ENCODE measurements at regions of chr10 and their contacts with region 1.

Region 1: DNA sequence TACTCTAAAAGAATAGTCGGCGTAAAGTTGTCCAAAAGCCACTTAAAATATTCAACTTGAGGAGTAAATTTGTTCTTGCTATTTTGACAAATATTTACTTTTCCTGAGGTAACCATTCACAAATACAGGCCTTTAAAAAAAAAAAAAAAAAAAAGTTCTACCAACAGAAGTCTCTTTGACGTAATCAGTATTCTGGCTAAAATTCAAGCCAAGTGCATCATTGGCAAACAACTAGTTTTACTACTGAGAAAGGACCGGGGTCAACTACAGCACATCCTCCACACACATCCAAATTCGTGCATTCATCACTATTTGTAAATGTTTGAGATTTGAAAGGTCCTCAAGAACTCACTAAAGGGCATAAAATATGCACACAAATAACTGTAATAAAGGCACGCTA is 2.0 kb downstream of the OAT start:
- DNase-seq: no peak
- ATAC-seq: no peak
- H3K4me3 ChIP-seq: no peak overlapping the region
- H3K27ac ChIP-seq: no peak overlapping the region
- H3K4me1 ChIP-seq: no peaks in the 10 kb centered on the region
- H3K27me3 ChIP-seq: 0 out of 4 replicates have a peak, but pooled peaks cover 0 to 6% of the 10 kb centered on the region in 2 experiments
- CTCF ChIP-seq: no peak
- EP300 ChIP-seq: no peak
- POLR2A ChIP-seq: no peak
- RAD21 ChIP-seq: no peak

Region 2: GRCh38 chr10:123926401-123927264 is 490.1 kb before region 1 on chr10:
- CTCF ChIA-PET with region 1: no interaction called
- POLR2A ChIA-PET with region 1: no interaction called
- RAD21 ChIA-PET with region 1: no interaction called
- SMC1A ChIA-PET with region 1: no interaction called
- in situ Hi-C with region 1: no loop called
- intact Hi-C with region 1: no loop called
- DNase-seq: peak; percentile 5
- ATAC-seq: peak; percentile 79
- H3K4me3 ChIP-seq: no peak overlapping the region
- H3K27ac ChIP-seq: no peak overlapping the region
- H3K4me1 ChIP-seq: no peaks in the 10 kb centered on the region
- H3K27me3 ChIP-seq: no peaks in the 10 kb centered on the region
- CTCF ChIP-seq: no peak
- EP300 ChIP-seq: no peak
- POLR2A ChIP-seq: no peak
- RAD21 ChIP-seq: no peak

Region 3: GRCh38 chr10:124106241-124106879 is 310.4 kb before region 1 on chr10:
- CTCF ChIA-PET with region 1: no interaction called
- POLR2A ChIA-PET with region 1: interaction called, 14 read pairs
- RAD21 ChIA-PET with region 1: no interaction called
- SMC1A ChIA-PET with region 1: no interaction called
- in situ Hi-C with region 1: no loop called
- intact Hi-C with region 1: no loop called
- DNase-seq: peak; percentile 57
- ATAC-seq: peak; percentile 97
- H3K4me3 ChIP-seq: peak overlapping the region; percentile 34; the same call in 1 of the 2 replicates
- H3K27ac ChIP-seq: peak overlapping the region; percentile 33
- H3K4me1 ChIP-seq: peaks cover 25% of the 10 kb centered on the region
- H3K27me3 ChIP-seq: peaks cover 0 to 5% of the 10 kb centered on the region in 2 experiments; a peak in 3 of 4 replicates
- CTCF ChIP-seq: no peak
- EP300 ChIP-seq: no peak
- POLR2A ChIP-seq: no peak
- RAD21 ChIP-seq: no peak

Region 4: DNA sequence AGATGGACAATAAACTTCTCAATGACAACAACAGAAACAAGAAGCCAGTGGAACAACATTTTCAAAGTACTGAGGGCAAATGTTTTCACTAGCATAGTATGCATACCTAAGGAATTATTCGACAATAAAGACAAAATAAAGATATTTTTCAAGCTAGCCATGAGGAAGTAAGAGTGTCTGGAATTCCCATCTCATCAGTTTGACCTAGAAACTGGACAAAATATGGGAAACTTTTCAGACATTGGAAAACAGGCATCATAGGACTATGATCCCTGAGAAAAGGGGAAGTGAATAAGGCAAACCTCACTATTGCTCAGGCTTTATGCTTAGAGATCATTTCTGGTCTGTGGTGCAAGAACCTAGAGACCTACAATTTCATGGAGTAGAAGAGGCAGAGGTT is 84.3 kb before region 1 on chr10:
- CTCF ChIA-PET with region 1: no interaction called
- POLR2A ChIA-PET with region 1: no interaction called
- RAD21 ChIA-PET with region 1: no interaction called
- SMC1A ChIA-PET with region 1: no interaction called
- in situ Hi-C with region 1: no loop called
- intact Hi-C with region 1: no loop called
- DNase-seq: no peak
- ATAC-seq: no peak
- H3K4me3 ChIP-seq: no peak overlapping the region
- H3K27ac ChIP-seq: no peak overlapping the region
- H3K4me1 ChIP-seq: no peaks in the 10 kb centered on the region
- H3K27me3 ChIP-seq: no peaks in the 10 kb centered on the region
- CTCF ChIP-seq: no peak
- EP300 ChIP-seq: no peak
- POLR2A ChIP-seq: no peak
- RAD21 ChIP-seq: no peak

Region 5: DNA sequence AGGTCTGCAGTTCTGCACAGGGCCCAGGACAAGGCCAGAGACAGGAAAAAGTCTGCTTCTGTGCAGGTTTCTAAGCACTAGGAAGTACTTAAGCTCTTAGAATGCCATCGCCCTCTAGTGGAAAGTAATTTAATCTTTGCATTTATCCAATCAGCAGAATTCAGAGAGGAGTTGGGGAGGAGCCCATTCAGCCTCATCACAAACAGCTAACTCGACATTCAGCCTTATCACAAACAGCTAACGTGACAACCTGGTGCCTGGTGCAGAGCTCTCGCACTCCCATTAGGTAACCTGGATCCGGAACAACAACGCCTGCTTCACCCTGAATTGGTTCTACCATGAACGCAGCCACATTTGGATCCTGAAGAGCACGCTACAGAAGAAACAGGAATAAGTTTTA is 13.2 kb before region 1 on chr10:
- CTCF ChIA-PET with region 1: interaction called, 18 read pairs
- POLR2A ChIA-PET with region 1: no interaction called
- RAD21 ChIA-PET with region 1: interaction called, 3 read pairs
- SMC1A ChIA-PET with region 1: interaction called, 4 read pairs
- in situ Hi-C with region 1: no loop called
- intact Hi-C with region 1: no loop called
- DNase-seq: peak; percentile 45
- ATAC-seq: peak; percentile 100
- H3K4me3 ChIP-seq: no peak overlapping the region
- H3K27ac ChIP-seq: no peak overlapping the region
- H3K4me1 ChIP-seq: no peaks in the 10 kb centered on the region
- H3K27me3 ChIP-seq: no peaks in the 10 kb centered on the region
- CTCF ChIP-seq: peak; percentile 56 to 76 (median 73)
- EP300 ChIP-seq: no peak
- POLR2A ChIP-seq: 0 out of 2 replicates have a peak, but pooled peaks have one; percentile 19
- RAD21 ChIP-seq: peak; percentile 72

Region 6: GRCh38 chr10:124477614-124478363 is 61.1 kb after region 1 on chr10:
- CTCF ChIA-PET with region 1: no interaction called
- POLR2A ChIA-PET with region 1: no interaction called
- RAD21 ChIA-PET with region 1: no interaction called
- SMC1A ChIA-PET with region 1: no interaction called
- in situ Hi-C with region 1: no loop called
- intact Hi-C with region 1: no loop called
- DNase-seq: no peak
- ATAC-seq: no peak
- H3K4me3 ChIP-seq: no peak overlapping the region
- H3K27ac ChIP-seq: no peak overlapping the region
- H3K4me1 ChIP-seq: no peaks in the 10 kb centered on the region
- H3K27me3 ChIP-seq: no peaks in the 10 kb centered on the region; a peak in 1 of 4 replicates
- CTCF ChIP-seq: no peak
- EP300 ChIP-seq: no peak
- POLR2A ChIP-seq: no peak
- RAD21 ChIP-seq: no peak

Region 7: DNA sequence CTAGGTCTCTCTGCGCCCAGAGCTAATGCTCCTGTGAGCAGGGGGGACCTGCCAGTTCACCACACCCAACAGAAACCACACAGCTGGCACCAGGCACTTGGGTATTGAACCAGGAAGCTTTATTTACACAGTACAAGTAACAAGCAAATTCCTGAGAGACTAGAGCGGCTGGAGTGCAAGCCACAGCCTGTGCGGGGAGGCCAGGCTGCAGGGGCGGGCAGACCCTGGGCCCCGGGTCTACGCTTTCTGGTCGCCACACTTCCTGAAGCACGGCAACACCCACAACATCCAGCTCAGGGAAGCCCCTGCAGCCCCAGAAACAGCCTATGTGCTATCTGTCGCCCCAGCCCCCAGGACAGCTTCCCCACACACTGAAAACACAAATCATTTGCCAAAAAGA is 202.5 kb after region 1 on chr10:
- CTCF ChIA-PET with region 1: no interaction called
- POLR2A ChIA-PET with region 1: no interaction called
- RAD21 ChIA-PET with region 1: no interaction called
- SMC1A ChIA-PET with region 1: no interaction called
- in situ Hi-C with region 1: no loop called
- intact Hi-C with region 1: no loop called
- DNase-seq: no peak
- ATAC-seq: peak; percentile 68
- H3K4me3 ChIP-seq: peak overlapping the region; percentile 49; the same call in 1 of the 2 replicates
- H3K27ac ChIP-seq: peak overlapping the region; percentile 25
- H3K4me1 ChIP-seq: peaks cover 44% of the 10 kb centered on the region
- H3K27me3 ChIP-seq: no peaks in the 10 kb centered on the region
- CTCF ChIP-seq: no peak
- EP300 ChIP-seq: no peak
- POLR2A ChIP-seq: no peak
- RAD21 ChIP-seq: no peak

Measured in GM12878 (cell line).